T-cell (primary cell): ENCODE measurements at regions of chr21 and their contacts with region 1.

Region 1: GRCh38 chr21:20856926-20857325 is 141.3 kb upstream of the NCAM2 start:
- DNase-seq: no peak
- ATAC-seq: no peak
- H3K4me3 ChIP-seq: no peak overlapping the region
- H3K4me3 Mint-ChIP-seq: no peak overlapping the region
- H3K27ac ChIP-seq: no peak overlapping the region
- H3K27ac Mint-ChIP-seq: no peak overlapping the region
- H3K4me1 ChIP-seq: no peaks in the 10 kb centered on the region
- H3K4me1 Mint-ChIP-seq: no peaks in the 10 kb centered on the region
- H3K27me3 ChIP-seq: no peaks in the 10 kb centered on the region
- H3K27me3 Mint-ChIP-seq: no peaks in the 10 kb centered on the region

Region 2: GRCh38 chr21:19141511-19141910 is 1715.4 kb before region 1 on chr21:
- CTCF ChIA-PET with region 1: no interaction called
- POLR2A ChIA-PET with region 1: no interaction called
- DNase-seq: no peak
- ATAC-seq: no peak
- H3K4me3 ChIP-seq: no peak overlapping the region
- H3K4me3 Mint-ChIP-seq: no peak overlapping the region
- H3K27ac ChIP-seq: no peak overlapping the region
- H3K27ac Mint-ChIP-seq: no peak overlapping the region
- H3K4me1 ChIP-seq: no peaks in the 10 kb centered on the region
- H3K4me1 Mint-ChIP-seq: no peaks in the 10 kb centered on the region
- H3K27me3 ChIP-seq: no peaks in the 10 kb centered on the region
- H3K27me3 Mint-ChIP-seq: no peaks in the 10 kb centered on the region

Region 3: GRCh38 chr21:20783611-20784010 is 73.3 kb before region 1 on chr21:
- CTCF ChIA-PET with region 1: interaction called in 1 of 2 experiments, 10 read pairs
- POLR2A ChIA-PET with region 1: no interaction called
- DNase-seq: no peak
- ATAC-seq: no peak
- H3K4me3 ChIP-seq: no peak overlapping the region
- H3K4me3 Mint-ChIP-seq: no peak overlapping the region
- H3K27ac ChIP-seq: no peak overlapping the region
- H3K27ac Mint-ChIP-seq: no peak overlapping the region
- H3K4me1 ChIP-seq: no peaks in the 10 kb centered on the region
- H3K4me1 Mint-ChIP-seq: no peaks in the 10 kb centered on the region
- H3K27me3 ChIP-seq: no peaks in the 10 kb centered on the region
- H3K27me3 Mint-ChIP-seq: no peaks in the 10 kb centered on the region